AG04450 (cell line): ENCODE measurements at regions of chr1 and their contacts with region 1.

Region 1: DNA sequence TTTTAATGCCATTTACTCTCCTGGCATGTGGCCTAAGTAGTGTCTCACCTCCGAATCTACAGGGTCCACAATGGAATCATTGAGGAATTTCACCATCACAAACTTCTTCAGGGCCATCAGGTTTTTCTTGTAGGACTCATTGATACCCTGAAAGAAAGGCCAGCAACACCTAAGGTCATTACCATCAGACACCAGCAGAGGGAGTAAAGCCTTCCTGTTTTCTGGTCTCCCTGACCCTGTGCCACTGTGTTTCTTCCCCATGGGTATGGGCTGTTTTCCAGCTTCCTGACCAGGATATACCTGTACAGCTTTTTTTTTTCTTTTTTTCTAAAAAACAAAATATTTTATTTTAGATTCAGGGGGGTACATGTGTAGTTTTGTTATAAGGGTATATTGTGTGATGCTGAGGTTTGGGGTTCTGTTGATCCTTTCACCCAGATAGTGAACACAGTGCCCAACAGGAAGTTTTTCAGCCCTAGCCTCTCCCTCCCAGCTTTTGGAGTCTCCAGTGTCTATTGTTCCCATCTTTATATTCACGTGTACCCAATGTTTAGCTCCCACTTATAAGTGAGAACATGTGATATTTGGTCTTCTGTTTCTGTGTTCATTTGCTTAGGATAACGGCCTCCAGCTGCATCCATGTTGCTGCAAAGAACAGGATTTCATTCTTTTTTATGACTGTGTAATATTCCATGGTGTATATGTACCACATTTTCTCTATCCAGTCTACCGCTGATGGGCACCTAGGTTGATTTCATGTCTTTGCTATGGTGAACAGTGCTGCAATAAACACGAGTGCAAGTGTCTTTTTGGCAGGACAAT is 18.3 kb downstream of the PPT1 start:
- DNase-seq: peak; percentile 13
- H3K4me3 ChIP-seq: no peak overlapping the region
- H3K27ac ChIP-seq: no peak overlapping the region
- H3K27me3 ChIP-seq: no peaks in the 10 kb centered on the region
- CTCF ChIP-seq: peak; percentile 82

Region 2: GRCh38 chr1:40094466-40095110 is 15.9 kb after region 1 on chr1:
- CTCF ChIA-PET with region 1: interaction called, 13 read pairs
- POLR2A ChIA-PET with region 1: no interaction called
- DNase-seq: no peak
- H3K4me3 ChIP-seq: no peak overlapping the region
- H3K27ac ChIP-seq: no peak overlapping the region
- H3K27me3 ChIP-seq: no peaks in the 10 kb centered on the region
- CTCF ChIP-seq: no peak

Region 3: DNA sequence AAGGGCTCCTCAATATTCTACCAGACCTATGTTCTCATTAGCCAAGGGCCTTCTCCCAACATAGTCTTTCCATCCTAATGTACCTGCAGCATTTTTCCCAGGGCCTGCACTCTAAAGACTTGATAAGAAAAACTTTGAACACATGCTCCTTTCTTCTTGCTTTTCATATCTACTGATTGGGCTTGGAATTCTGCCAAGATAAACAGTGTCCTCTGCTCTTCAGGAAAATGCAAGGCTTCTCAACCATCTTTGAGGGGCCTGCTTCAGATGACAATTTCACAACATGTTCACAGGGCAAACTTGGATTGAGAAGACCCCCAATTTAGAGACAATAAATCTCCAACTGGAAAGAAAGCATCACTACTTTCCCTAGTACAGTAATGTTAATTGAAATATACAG is 44.1 kb after region 1 on chr1:
- CTCF ChIA-PET with region 1: no interaction called
- POLR2A ChIA-PET with region 1: no interaction called
- DNase-seq: no peak
- H3K4me3 ChIP-seq: no peak overlapping the region
- H3K27ac ChIP-seq: no peak overlapping the region
- H3K27me3 ChIP-seq: peaks cover 31% of the 10 kb centered on the region
- CTCF ChIP-seq: no peak

Region 4: DNA sequence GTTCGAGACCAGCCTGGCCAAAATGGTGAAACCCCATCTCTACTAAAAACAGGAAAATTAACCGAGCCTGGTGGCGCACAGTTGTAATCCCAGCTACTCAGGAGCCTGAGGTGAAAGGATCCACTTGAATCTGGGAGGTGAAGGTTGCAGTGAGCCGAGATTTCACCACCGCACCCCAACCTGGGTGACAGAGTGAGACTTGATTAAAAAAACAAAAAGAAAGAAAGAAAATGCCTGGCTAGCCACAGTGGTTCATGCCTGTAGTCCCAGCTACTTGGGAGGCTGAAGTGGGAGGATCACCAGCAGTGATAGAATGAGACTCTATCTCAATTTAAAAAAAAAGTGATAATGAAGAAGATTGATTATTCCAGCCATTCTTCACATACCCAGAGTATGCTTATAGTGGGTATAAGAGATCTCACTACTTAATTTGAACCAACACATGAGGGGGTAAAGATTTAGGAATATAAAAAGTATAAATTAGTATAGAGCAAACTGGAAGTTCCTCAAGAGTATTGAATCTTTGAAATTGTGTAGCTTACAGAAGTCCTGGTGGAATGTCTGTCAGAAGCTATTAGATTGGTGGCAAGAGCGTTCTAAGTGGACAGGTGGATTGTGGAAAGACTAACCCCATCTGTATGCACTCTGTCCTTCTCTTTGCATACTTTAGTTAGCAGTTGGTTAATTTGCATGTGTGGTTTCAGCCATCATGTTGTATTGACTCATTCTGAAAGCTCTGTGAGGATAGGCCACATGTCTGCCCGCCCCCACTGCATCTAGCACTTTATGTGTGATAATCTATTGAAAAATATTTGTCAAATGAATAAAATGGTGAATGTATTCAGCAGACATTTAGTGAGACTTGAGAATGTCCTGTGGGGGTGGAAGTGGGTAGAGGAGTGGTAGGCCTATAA is 107.5 kb after region 1 on chr1:
- CTCF ChIA-PET with region 1: no interaction called
- POLR2A ChIA-PET with region 1: no interaction called
- DNase-seq: no peak
- H3K4me3 ChIP-seq: no peak overlapping the region
- H3K27ac ChIP-seq: no peak overlapping the region
- H3K27me3 ChIP-seq: no peaks in the 10 kb centered on the region
- CTCF ChIP-seq: no peak

Region 5: DNA sequence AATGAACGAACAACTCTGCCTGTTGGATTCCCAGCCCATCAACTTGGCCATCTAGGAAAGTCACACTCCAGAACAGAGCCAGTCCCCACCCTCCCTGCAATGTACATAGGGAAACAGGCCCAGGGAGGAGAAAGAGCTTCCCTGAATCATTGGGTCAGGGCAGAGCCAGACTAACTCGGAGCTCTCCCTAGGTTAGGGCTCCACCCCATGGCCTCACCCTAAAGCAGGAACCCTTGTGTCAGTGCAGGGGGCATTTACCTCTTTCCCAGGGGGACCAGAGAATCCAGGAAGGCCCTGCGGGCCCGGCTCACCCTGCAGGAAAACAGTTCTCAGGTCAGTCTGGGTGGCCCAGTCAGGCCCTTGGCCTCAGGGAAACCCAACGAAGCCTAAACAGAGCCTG is 226.7 kb after region 1 on chr1:
- CTCF ChIA-PET with region 1: no interaction called
- POLR2A ChIA-PET with region 1: no interaction called
- DNase-seq: no peak
- H3K4me3 ChIP-seq: no peak overlapping the region
- H3K27ac ChIP-seq: no peak overlapping the region
- H3K27me3 ChIP-seq: peaks cover 2% of the 10 kb centered on the region
- CTCF ChIP-seq: peak; percentile 19; the same call in 1 of the 2 replicates